ENCODE measurements at regions of chr16 and their contacts with region 1.

Region 1: GRCh38 chr16:48556913-48557351 is 53.0 kb downstream of the N4BP1 start:
- DNase-seq: no peak
- H3K4me3 Mint-ChIP-seq: no peak overlapping the region
- H3K27ac Mint-ChIP-seq: peak overlapping the region; percentile 77
- H3K4me1 Mint-ChIP-seq: peaks cover 76% of the 10 kb centered on the region
- H3K27me3 Mint-ChIP-seq: no peaks in the 10 kb centered on the region

Region 2: GRCh38 chr16:48330841-48331192 is 226.1 kb before region 1 on chr16:
- intact Hi-C with region 1: no loop called
- DNase-seq: no peak
- H3K4me3 Mint-ChIP-seq: no peak overlapping the region
- H3K27ac Mint-ChIP-seq: no peak overlapping the region
- H3K4me1 Mint-ChIP-seq: peaks cover 3% of the 10 kb centered on the region
- H3K27me3 Mint-ChIP-seq: no peaks in the 10 kb centered on the region

Region 3: DNA sequence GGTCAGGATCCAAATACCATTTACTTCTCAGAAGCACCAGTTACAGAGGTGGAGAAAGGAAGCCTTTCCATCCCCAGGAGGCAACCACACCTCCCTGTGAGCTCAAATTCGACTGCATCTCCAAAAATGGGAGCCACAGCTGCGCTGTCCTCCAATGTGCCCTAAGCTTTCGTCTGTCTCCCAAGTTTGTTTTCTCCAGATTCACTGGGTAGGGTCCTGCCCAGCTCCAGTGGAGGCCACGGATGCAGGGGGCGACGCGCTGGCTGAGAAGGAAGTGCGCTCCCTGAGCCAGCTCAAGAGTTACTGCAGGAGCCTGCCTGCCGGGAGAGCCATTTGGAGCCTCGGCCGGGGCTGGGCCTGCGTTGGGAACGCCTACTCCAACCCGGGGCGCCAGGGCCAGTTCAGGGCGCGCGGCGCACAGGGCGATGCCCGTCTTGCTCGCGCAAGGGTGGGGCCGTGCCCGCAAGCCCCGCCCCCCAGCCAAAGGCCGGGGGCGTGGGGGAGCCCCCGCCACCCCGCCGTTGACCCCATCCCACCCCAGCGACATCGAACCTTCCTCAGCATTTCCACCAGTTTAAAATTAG is 191.3 kb before region 1 on chr16:
- intact Hi-C with region 1: loop called (anchors 5 kb)
- DNase-seq: peak; percentile 78
- H3K4me3 Mint-ChIP-seq: peak overlapping the region; percentile 89
- H3K27ac Mint-ChIP-seq: peak overlapping the region; percentile 95
- H3K4me1 Mint-ChIP-seq: peaks cover 53% of the 10 kb centered on the region
- H3K27me3 Mint-ChIP-seq: no peaks in the 10 kb centered on the region

Region 4: DNA sequence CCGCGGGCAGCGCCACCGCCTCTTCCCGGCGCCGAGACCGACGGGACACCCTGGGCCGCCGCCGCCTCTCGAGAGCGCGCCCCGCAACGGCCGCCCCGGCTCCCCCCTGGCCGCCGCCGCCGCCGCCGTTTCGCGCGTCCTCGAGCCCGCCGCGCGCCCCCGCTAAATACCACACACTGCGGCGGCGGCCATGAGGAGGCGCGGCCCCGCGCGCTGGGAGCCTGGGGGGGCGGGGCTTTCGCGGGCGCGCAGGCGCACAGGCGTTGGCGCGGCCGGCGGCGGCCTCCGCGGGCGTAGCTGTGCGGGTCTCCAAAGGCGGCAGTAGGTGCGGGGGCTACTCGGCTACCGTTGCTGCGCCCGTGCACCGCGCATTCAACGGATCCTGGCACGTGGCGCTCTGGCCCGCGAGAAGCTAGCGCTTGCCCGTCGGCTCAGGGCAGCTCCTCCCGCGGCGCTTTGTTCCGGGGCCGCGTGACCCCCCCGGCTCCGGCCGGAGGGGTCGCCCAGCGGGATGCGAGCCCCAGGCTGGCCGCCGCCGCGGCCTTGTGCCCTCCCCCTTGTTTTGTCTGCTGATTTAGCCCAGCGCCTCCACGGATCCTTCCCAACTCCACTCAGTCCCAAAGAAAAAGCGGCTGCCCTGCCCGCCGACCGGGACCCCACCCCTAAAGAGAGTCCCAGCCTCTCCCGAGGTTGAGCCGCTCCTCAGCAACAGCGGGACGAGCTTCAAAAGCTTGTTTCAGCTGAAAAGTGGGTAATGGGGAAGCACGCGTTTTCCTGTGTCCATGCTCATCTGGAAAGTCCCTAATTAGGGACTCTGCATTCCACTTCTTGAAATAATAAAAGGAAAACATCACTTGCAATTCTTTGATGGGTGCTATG is 171.4 kb before region 1 on chr16 and contains the start of gene SIAH1:
- intact Hi-C with region 1: loop called (anchors 5 kb)
- DNase-seq: peak; percentile 86
- H3K4me3 Mint-ChIP-seq: peak within 1 kb of the TSS; percentile 94
- H3K27ac Mint-ChIP-seq: peak within 1 kb of the TSS; percentile 92
- H3K4me1 Mint-ChIP-seq: peaks cover 23% of the 10 kb centered on the region
- H3K27me3 Mint-ChIP-seq: no peaks in the 10 kb centered on the region
- total RNA-seq, gene SIAH1: 16.2 and 17.0 TPM in 2 replicates

Region 5: DNA sequence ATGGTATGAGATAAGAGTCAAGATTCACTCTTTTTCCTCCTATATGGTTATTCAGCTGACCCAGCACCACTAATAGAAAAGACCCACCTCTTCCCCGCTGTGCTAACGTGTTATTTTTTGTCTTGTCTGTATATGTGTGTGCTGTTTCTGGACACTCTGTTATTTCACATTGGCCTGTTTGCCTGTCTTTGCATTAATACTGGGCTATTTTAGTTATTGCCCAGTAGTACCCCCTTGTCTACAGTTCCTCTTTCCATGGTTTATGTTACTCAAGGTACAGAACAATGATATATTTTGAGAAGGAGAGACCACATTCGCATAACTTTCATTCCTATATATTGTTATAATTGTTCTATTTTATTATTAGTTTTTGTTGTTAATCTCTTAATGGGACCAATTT is 97.8 kb before region 1 on chr16:
- intact Hi-C with region 1: loop called (anchors 2 kb)
- DNase-seq: no peak
- H3K4me3 Mint-ChIP-seq: no peak overlapping the region
- H3K27ac Mint-ChIP-seq: no peak overlapping the region
- H3K4me1 Mint-ChIP-seq: peaks cover 15% of the 10 kb centered on the region
- H3K27me3 Mint-ChIP-seq: peaks cover 39% of the 10 kb centered on the region

Region 6: DNA sequence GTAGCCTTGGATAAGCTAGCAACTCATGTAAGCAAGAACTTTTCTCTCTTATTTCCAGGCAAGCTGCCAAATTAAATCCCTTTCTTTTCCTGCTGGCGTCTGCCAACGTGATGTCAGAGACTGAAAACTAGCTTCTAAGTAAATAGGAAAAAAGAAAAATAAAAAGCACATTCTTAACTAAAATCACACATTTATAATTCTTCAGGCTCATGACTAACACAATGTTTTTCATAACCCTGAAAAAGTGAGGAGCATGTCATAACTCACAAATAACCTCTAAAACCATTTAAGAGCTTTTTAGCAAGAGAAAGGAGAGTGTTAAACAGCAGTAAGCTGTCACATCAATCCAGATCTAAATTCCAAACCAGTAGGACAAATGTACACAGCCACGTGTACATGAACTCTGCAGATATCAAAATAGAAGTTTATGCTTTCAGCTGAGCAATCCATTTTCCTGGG is 57.0 kb before region 1 on chr16:
- intact Hi-C with region 1: no loop called
- DNase-seq: no peak
- H3K4me3 Mint-ChIP-seq: no peak overlapping the region
- H3K27ac Mint-ChIP-seq: no peak overlapping the region
- H3K4me1 Mint-ChIP-seq: no peaks in the 10 kb centered on the region
- H3K27me3 Mint-ChIP-seq: no peaks in the 10 kb centered on the region

Region 7: GRCh38 chr16:48576927-48577326 is 20.0 kb after region 1 on chr16:
- intact Hi-C with region 1: loop called (anchors 1 kb)
- DNase-seq: no peak
- H3K4me3 Mint-ChIP-seq: no peak overlapping the region
- H3K27ac Mint-ChIP-seq: peak overlapping the region; percentile 56
- H3K4me1 Mint-ChIP-seq: peaks cover 33% of the 10 kb centered on the region
- H3K27me3 Mint-ChIP-seq: no peaks in the 10 kb centered on the region